ENCODE measurements at regions of chr6 and their contacts with region 1.

Region 1: DNA sequence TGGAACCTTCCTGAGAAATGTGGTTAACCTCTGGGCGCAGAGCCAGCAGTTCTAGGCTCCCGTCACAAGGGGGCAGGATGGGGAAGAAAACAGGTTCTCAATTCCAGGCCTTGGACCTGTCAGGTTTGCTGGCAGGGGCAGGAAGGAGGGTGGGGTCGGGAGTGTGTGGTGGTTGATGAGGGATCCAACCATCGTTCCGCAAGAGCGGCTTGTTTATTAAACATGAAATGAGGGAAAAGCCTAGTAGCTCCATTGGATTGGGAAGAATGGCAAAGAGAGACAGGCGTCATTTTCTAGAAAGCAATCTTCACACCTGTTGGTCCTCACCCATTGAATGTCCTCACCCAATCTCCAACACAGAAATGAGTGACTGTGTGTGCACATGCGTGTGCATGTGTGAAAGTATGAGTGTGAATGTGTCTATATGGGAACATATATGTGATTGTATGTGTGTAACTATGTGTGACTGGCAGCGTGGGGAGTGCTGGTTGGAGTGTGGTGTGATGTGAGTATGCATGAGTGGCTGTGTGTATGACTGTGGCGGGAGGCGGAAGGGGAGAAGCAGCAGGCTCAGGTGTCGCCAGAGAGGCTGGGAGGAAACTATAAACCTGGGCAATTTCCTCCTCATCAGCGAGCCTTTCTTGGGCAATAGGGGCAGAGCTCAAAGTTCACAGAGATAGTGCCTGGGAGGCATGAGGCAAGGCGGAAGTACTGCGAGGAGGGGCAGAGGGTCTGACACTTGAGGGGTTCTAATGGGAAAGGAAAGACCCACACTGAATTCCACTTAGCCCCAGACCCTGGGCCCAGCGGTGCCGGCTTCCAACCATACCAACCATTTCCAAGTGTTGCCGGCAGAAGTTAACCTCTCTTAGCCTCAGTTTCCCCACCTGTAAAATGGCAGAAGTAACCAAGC is 29.6 kb downstream of the SRSF3 start:
- DNase-seq: peak; percentile 84
- CTCF ChIP-seq: peak; percentile 91

Region 2: DNA sequence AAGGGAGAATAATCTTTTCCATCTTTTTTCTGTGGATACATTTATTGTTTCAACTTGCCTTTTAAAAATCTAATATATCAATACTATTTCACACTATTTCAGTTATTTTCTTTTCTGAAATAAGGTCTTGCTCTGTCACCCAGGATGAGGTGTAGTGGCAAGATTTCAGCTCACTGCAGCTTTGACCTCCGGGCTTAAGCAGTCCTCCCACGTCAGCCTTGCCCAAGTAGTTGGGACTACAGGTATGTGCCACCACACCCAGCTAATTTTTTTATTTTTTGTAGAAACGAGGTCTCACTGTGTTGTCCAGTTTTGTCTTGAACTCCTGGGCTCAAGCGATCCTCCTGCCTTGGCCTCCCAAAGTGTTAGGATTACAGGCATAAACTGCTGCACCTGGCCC is 172.4 kb before region 1 on chr6:
- CTCF ChIA-PET with region 1: no interaction called
- POLR2A ChIA-PET with region 1: no interaction called
- DNase-seq: no peak
- CTCF ChIP-seq: no peak

Region 3: GRCh38 chr6:36666726-36667591 is 43.2 kb after region 1 on chr6:
- CTCF ChIA-PET with region 1: interaction called, 17 read pairs
- POLR2A ChIA-PET with region 1: no interaction called
- DNase-seq: peak; percentile 76
- CTCF ChIP-seq: no peak

Region 4: DNA sequence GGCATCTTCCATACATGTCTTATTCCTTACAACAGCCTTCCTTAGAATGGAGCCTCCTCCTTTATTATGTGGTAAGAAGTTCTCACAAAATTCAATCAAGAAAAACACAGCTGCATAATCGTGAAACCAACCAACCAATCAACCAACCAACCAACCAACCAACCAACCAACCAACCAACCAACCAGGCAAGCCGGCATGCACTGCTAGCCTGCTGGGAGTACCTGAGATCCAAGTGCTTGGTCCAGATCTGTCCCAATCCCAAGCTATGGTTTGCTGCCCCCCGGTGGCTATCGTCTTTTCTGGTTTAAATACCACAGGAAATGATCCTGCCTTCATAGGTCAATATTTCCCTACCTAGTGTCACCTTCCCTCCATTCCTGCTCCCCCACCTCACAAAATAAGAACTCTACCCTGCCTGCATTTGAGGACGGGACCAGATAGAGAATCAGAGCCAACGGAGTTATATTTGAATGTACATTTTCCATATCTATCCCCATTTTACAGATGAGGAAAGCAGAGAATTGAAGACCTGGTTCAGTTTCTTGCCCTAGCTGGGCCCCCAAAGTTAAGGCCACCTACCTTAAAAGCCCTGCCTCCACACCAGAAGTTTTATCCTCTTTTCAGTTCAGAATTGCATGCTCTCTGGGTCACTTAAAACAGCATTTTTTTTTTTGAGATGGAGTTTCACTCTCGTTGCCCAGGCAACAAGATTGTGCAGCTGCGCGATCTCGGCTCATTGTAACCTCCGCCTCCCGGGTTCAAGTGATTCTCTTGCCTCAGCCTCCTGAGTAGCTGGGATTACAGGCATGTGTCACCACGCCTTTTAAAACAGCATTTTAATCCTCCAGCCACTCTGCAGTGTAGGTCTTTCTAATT is 100.9 kb after region 1 on chr6:
- CTCF ChIA-PET with region 1: interaction called, 16 read pairs
- POLR2A ChIA-PET with region 1: no interaction called
- DNase-seq: peak; percentile 71
- CTCF ChIP-seq: peak; percentile 58

Region 5: DNA sequence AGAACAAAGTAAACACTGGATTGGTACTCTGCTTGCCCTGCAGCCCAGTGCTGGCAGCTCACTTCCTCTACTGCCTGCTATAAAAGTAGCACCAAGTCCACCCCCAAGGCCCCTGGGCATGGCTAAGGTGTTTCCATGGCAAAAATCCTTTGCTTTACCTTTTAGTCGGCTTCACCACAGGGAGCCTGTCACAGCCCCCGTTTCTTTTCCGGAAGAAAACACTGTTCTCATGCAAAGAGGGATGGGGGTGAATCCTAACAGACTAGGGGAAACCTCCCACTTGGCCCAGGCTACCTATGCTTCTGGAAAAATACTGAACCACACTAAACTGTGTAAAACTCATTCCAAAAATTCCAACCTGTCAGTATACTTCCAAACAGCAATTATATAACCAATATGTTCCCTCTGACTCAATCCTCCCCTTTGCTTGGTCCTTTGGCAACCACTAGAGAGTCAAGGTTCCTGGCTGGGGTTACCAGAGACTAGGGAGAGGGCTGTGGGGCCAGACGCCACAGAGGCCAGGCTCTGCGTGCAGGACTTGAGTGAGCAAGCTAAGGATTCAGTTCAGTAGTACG is 234.7 kb after region 1 on chr6:
- CTCF ChIA-PET with region 1: no interaction called
- POLR2A ChIA-PET with region 1: no interaction called
- DNase-seq: no peak
- CTCF ChIP-seq: no peak